AG04450 (cell line): ENCODE measurements at regions of chr6 and their contacts with region 1.

Region 1: GRCh38 chr6:133644892-133645619 is 243.9 kb upstream of the TCF21 start:
- DNase-seq: peak; percentile 78
- H3K4me3 ChIP-seq: no peak overlapping the region
- H3K27ac ChIP-seq: no peak overlapping the region
- H3K27me3 ChIP-seq: no peaks in the 10 kb centered on the region
- CTCF ChIP-seq: no peak

Region 2: DNA sequence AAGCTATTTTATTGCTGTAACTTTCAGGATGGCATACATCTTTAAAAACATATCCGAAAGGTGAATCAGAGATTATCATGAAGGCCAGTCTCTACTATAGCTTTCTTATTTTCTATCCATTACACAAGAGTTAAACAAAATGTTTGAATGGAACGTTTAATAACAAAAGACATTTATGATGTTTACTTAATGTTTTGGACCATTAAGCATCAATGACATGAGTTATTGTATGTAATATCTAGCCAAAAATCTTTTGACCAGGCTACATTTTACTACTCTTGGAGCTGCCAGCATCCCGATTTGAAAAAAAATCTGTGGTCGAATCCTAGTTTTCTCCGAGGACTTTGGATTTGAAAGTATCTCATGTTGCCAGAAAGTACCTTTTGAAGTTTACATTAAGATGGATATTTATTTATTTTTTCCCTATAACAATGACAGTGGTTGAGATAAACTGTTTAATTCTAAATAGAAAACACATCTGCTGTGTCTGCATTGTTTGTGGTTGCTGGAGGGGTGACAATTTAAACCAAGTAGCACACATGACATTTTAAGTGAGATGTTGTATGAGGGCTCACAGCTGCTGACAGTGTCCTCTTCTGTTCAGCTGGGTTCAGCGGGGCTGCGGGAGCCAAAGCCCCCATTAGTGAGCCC is 49.8 kb before region 1 on chr6:
- CTCF ChIA-PET with region 1: interaction called, 3 read pairs
- POLR2A ChIA-PET with region 1: interaction called, 18 read pairs
- DNase-seq: peak; percentile 45
- H3K4me3 ChIP-seq: no peak overlapping the region
- H3K27ac ChIP-seq: peak overlapping the region; percentile 49
- H3K27me3 ChIP-seq: no peaks in the 10 kb centered on the region
- CTCF ChIP-seq: no peak

Region 3: DNA sequence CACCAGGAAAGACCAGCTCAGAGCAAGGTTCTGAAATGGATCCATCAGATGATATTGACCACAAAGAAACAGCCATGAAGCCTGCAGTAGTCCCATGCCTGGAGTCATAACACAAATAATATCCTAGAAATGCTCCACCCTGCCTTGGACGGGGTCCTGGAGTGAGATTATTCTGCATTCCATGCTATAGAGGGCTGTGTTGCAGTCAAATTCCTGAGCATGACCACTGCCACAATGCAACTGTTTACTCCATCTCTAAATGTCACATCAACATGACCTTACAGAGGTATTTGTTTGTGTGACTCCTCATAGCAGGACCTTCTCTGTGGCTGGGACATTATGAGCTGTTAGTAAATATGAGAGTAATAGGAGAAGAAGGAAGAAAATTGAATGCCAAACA is 13.6 kb before region 1 on chr6:
- CTCF ChIA-PET with region 1: interaction called, 4 read pairs
- POLR2A ChIA-PET with region 1: interaction called, 15 read pairs
- DNase-seq: no peak
- H3K4me3 ChIP-seq: no peak overlapping the region
- H3K27ac ChIP-seq: no peak overlapping the region
- H3K27me3 ChIP-seq: no peaks in the 10 kb centered on the region
- CTCF ChIP-seq: peak; percentile 42

Region 4: GRCh38 chr6:133682506-133683307 is 37.7 kb after region 1 on chr6:
- CTCF ChIA-PET with region 1: no interaction called
- POLR2A ChIA-PET with region 1: no interaction called
- DNase-seq: no peak
- H3K4me3 ChIP-seq: no peak overlapping the region
- H3K27ac ChIP-seq: no peak overlapping the region
- H3K27me3 ChIP-seq: no peaks in the 10 kb centered on the region
- CTCF ChIP-seq: no peak

Region 5: GRCh38 chr6:133891149-133891926 is 246.3 kb after region 1 on chr6:
- CTCF ChIA-PET with region 1: no interaction called
- POLR2A ChIA-PET with region 1: interaction called, 63 read pairs
- DNase-seq: no peak
- H3K4me3 ChIP-seq: peak overlapping the region; percentile 98
- H3K27ac ChIP-seq: peak overlapping the region; percentile 75
- H3K27me3 ChIP-seq: no peaks in the 10 kb centered on the region
- CTCF ChIP-seq: 0 out of 2 replicates have a peak, but pooled peaks have one; percentile 9

Region 6: GRCh38 chr6:133945158-133945557 is 300.1 kb after region 1 on chr6:
- CTCF ChIA-PET with region 1: no interaction called
- POLR2A ChIA-PET with region 1: no interaction called
- DNase-seq: no peak
- H3K4me3 ChIP-seq: no peak overlapping the region
- H3K27ac ChIP-seq: no peak overlapping the region
- H3K27me3 ChIP-seq: no peaks in the 10 kb centered on the region
- CTCF ChIP-seq: no peak